Activated CD4-positive, alpha-beta memory T cell treated with anti-CD3 and anti-CD28 coated beads for 36 hours (primary cell): ENCODE measurements at regions of chr17 and their contacts with region 1.

Region 1: DNA sequence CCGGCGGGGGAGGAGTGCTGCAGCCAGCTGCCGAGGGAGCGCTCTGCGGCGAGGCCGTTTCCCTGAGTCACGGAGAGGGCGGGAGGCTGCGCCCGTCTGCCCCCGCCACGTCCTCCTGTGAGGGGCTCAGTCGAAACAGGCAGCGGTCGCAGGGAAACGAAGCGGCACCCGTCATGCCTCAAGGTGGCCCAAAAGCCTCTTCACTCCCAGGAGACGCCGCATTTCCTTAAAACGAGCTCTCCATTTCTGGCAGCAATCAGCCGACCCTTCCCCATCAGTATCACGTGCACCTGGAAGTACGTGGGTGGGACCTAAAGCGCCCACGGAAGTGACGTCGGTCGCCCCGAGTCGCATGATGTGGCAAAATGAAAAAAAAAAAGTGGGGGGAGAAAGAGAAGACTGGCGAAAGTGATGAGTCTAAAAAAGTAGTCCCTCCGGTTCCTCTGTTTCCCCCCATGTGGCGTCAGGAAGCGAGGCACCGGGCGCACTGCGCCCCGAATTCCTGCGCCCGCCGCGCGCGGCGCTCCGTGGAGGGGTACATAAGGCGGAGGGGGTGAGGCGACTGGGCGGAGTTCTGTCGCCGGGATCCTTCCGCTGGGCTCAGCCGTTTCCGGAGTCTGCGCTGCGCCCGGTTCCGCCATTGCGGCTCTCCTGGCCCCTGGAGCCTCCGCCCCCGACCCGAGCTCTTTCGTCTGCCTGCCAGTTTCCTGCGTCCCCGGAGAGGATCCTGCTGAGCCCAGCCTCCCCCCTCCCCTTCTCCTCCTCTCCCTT is at the start of gene CLTC:
- DNase-seq: peak; percentile 96
- H3K4me3 Mint-ChIP-seq: peak within 1 kb of the TSS; percentile 94
- H3K27ac Mint-ChIP-seq: peak within 1 kb of the TSS; percentile 100
- H3K4me1 Mint-ChIP-seq: peaks cover 50% of the 10 kb centered on the region
- H3K27me3 Mint-ChIP-seq: no peaks in the 10 kb centered on the region
- total RNA-seq, gene CLTC: 203 to 206 TPM

Region 2: DNA sequence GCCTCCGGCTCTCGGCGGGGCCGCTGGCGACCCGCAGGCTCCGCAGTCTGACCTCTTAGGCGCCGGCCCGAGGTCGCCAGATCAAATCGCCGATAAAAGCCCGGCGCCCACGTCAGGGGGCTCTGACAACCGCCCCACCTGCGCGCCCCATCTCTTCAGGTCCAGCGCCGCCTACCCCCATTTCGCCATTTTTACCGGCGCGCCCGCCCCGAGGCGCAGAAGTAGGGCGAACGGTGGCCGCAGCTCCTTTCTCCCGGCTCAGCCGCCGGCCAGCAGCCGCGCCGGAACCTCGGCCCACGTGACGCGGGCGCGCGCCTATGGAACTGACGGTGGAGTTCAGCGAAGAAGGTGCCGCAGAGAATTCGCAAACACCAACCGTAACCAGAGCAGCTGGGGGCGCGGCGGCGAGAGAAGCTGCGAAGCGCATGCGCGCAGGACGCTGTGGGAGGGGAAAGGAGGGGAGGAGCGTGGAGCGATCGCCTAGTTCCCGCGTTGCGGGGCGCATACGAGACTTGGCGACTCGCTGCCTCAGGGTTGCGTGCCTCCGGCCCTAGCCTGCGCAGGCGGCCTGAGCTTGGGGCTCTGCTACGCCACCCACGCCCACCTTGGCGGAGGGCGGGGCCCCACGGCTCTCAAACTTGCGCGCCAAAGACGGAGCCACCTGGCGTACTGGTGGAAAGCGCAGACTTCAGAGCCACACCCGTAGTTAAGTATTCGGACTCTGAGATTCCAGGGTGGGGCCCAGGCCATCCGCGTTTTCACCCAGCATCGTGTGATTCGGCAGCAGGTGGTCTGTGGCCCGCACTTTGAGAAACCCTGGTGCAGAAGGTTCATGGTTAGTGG is 512.8 kb before region 1 on chr17 and contains the start of gene TRIM37:
- CTCF ChIA-PET with region 1: no interaction called
- POLR2A ChIA-PET with region 1: interaction called, 6 read pairs
- intact Hi-C with region 1: loop called (anchors 2 kb)
- DNase-seq: peak; percentile 100
- H3K4me3 Mint-ChIP-seq: peak within 1 kb of the TSS; percentile 98
- H3K27ac Mint-ChIP-seq: peak within 1 kb of the TSS; percentile 94
- H3K4me1 Mint-ChIP-seq: peaks cover 47% of the 10 kb centered on the region
- H3K27me3 Mint-ChIP-seq: no peaks in the 10 kb centered on the region
- total RNA-seq, gene TRIM37: 21.4 to 27.3 TPM

Region 3: DNA sequence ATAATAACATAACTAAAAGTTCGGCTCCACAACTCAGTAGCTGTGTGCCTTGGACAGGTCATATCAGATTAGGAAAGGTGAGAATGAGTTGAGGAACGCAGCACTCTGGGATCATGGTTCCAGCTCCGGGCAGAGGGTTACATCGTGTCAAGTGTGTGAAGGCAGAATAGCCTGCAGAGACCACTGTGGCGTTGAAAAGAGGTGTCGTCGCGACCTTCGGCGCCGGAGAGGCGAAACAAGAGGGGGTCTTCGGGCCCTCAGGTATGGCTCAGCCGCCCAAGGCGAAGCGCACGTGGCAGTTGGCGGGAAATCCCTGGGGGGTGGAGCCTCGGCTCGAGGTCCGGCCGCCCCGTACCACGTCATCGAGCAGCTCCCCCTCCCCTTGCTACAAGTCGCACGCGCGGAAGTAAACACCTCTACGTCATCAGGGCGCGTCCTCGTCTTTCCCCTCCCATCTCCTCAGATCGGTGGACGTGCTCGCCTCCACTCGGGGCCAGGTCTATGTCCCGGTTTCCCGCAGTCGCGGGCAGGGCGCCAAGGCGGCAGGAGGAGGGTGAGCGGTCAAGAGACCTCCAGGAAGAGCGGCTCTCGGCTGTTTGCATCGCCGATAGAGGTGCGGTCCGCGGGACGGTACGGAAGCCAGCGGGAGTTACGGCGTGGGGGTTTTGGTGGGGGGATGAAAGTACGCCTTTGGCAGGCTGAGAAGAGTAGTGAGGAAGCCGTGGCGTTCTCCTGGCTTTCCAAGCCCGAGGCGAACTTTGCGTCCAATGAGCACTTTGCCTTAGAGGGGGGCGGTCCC is 54.1 kb before region 1 on chr17 and contains the start of gene DHX40:
- CTCF ChIA-PET with region 1: no interaction called
- POLR2A ChIA-PET with region 1: interaction called, 12 read pairs
- intact Hi-C with region 1: loop called (anchors 1 kb)
- DNase-seq: peak; percentile 97
- H3K4me3 Mint-ChIP-seq: peak within 1 kb of the TSS; percentile 100
- H3K27ac Mint-ChIP-seq: peak within 1 kb of the TSS; percentile 94
- H3K4me1 Mint-ChIP-seq: peaks cover 22% of the 10 kb centered on the region
- H3K27me3 Mint-ChIP-seq: peaks cover 3% of the 10 kb centered on the region
- total RNA-seq, gene DHX40: 17.9 to 19.0 TPM

Region 4: GRCh38 chr17:59634632-59635541 is 15.4 kb after region 1 on chr17:
- CTCF ChIA-PET with region 1: interaction called, 4 read pairs
- POLR2A ChIA-PET with region 1: interaction called, 36 read pairs
- intact Hi-C with region 1: no loop called
- DNase-seq: no peak
- H3K4me3 Mint-ChIP-seq: peak overlapping the region; percentile 8
- H3K27ac Mint-ChIP-seq: peak overlapping the region; percentile 74
- H3K4me1 Mint-ChIP-seq: peaks cover 60% of the 10 kb centered on the region
- H3K27me3 Mint-ChIP-seq: no peaks in the 10 kb centered on the region

Region 5: GRCh38 chr17:59786536-59787319 is 167.2 kb after region 1 on chr17:
- CTCF ChIA-PET with region 1: no interaction called
- POLR2A ChIA-PET with region 1: no interaction called
- intact Hi-C with region 1: loop called (anchors 2 kb)
- DNase-seq: peak; percentile 89
- H3K4me3 Mint-ChIP-seq: peak overlapping the region; percentile 77
- H3K27ac Mint-ChIP-seq: peak overlapping the region; percentile 100
- H3K4me1 Mint-ChIP-seq: peaks cover 64% of the 10 kb centered on the region
- H3K27me3 Mint-ChIP-seq: no peaks in the 10 kb centered on the region

Region 6: GRCh38 chr17:60392042-60392844 is 772.8 kb after region 1 on chr17 and contains the start of gene USP32:
- CTCF ChIA-PET with region 1: no interaction called
- POLR2A ChIA-PET with region 1: interaction called, 4 read pairs
- intact Hi-C with region 1: loop called (anchors 5 kb)
- DNase-seq: peak; percentile 100
- H3K4me3 Mint-ChIP-seq: peak within 1 kb of the TSS; percentile 93
- H3K27ac Mint-ChIP-seq: peak within 1 kb of the TSS; percentile 97
- H3K4me1 Mint-ChIP-seq: peaks cover 42% of the 10 kb centered on the region
- H3K27me3 Mint-ChIP-seq: no peaks in the 10 kb centered on the region
- total RNA-seq, gene USP32: 34.4 to 35.8 TPM